ENCODE measurements at regions of chr3 and their contacts with region 1.

Region 1: DNA sequence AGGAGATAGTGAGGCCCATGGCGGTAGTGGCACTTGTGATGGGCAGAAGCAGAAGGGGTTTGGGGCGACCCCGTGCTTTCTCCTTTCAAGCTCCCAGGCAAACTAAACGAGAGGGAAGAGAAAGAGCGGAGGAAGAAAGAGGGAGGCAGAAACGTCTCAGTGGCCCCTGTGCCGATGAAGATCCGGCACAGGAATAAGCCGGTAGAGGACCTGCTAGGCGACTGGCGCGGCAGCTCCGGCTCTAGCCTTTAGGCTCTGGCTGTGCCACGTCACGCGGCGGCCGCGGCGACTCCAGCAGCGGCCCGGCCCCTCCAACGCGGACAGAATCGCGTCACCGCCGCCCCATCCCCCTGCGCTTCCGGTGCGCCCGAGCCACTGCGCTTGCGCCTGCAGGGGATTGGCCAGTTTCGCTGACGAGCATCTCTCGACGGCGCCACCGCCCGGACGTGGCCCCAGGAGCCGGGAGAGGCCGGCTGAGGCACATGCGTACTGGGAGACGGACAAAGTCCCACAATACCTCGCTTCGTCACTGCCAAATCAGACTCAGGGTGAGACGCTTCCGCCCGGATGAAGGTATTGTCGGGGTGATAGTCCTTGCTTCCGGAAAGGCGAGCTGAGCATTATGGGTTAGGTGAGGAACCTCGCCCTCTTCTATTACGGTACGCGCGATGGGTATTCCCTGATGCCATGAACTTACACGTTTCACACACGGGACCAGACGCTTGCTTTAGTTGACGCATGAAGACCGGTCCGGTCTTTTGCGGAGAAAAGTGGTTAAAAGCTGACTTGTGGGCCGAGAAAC is at the start of gene ARF4:
- DNase-seq: peak; percentile 100
- ATAC-seq: peak; percentile 83 to 96 (median 85)
- H3K4me3 ChIP-seq: peak within 1 kb of the TSS; percentile 77
- H3K4me3 Mint-ChIP-seq: peak within 1 kb of the TSS; percentile 95
- H3K27ac ChIP-seq: peak within 1 kb of the TSS; percentile 99
- H3K27ac Mint-ChIP-seq: peak within 1 kb of the TSS; percentile 99
- H3K4me1 ChIP-seq: peaks cover 28% of the 10 kb centered on the region
- H3K4me1 Mint-ChIP-seq: peaks cover 53 to 60% of the 10 kb centered on the region in 2 donors
- H3K27me3 ChIP-seq: no peaks in the 10 kb centered on the region
- H3K27me3 Mint-ChIP-seq: no peaks in the 10 kb centered on the region
- CTCF ChIP-seq: no peak
- total RNA-seq, gene ARF4: 88.0 to 132 (median 89.6) TPM

Region 2: DNA sequence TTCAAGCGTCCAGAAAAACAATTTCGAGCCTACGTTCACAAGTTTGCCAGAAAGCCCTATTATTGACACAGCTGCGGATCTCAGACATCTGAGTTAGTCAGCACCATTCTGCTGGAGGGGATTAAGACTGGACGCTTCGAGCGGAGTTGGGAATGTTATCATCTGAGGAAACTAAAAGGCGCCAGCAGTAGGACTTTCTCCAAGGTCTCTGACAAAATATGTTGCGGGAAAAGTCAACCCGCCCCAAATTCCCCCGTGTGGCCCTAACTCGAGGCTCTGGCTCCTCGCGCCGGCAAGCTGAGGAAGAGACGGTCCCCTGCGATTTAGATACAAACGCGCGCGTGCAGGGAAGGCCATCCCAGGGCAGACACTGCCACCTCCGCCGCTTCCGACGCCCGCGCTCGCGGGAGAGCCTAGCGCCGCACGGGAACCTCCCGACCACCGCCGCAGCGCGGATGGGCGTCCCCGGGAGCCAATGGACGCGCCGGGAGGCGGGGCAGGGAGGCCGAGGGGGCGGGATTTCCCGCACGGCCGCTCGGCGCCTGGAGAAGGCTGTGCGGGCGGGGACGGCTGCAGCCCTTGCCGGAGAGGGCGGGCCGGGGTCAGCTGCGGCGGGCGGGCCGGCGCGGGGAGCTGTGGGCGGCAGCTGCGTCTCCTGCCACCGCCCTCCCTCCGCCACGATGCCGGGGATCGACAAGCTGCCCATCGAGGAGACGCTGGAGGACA is 370.0 kb before region 1 on chr3 and contains the start of gene APPL1:
- intact Hi-C with region 1: loop called (anchors 2 kb)
- DNase-seq: peak; percentile 86 to 93
- ATAC-seq: peak; percentile 86 to 94 (median 93)
- H3K4me3 ChIP-seq: peak within 1 kb of the TSS; percentile 71
- H3K4me3 Mint-ChIP-seq: peak within 1 kb of the TSS; percentile 92
- H3K27ac ChIP-seq: peak within 1 kb of the TSS; percentile 49
- H3K27ac Mint-ChIP-seq: peak within 1 kb of the TSS; percentile 75 to 85
- H3K4me1 ChIP-seq: peaks cover 12% of the 10 kb centered on the region
- H3K4me1 Mint-ChIP-seq: peaks cover 21 to 25% of the 10 kb centered on the region in 2 donors
- H3K27me3 ChIP-seq: no peaks in the 10 kb centered on the region
- H3K27me3 Mint-ChIP-seq: no peaks in the 10 kb centered on the region
- CTCF ChIP-seq: no peak
- total RNA-seq, gene APPL1: 29.6 to 40.8 (median 38.2) TPM

Region 3: DNA sequence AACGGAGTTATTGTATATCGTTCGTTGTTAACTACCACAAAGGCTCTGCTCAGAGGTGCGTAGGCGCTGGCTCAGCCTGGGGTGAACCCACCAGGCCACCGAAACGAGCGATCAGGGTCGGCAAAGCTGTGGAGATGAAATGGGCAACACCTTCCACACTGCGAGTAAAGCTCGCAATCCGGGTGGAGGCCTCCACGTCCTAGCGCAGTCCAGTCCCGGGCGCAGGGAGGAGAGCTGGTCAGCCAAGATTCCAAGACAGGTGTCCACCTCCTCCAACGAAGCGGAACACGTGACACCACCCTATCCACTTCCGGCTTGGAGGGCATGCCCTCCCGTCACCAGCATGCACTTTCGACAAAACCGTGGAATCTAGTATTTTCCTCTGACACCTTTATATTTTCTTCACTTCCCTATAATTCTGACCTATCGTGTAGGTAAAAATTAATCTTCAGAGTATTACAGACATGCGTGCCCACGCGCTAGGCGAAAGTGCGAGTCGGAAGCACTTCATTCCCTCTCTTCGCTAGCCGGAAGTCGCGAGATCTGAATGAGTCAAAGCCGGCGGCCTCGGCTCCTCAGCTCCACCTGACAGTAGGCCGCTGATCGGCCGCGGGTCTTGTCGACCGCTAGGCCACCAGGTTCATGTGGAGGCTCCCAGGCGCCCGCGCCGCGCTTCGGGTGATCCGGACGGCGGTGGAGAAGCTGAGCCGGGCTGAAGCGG is 41.4 kb before region 1 on chr3 and contains the start of gene PDE12:
- intact Hi-C with region 1: loop called (anchors 1 kb)
- DNase-seq: peak; percentile 84 to 90
- ATAC-seq: peak; percentile 78 to 88 (median 82)
- H3K4me3 ChIP-seq: peak within 1 kb of the TSS; percentile 76
- H3K4me3 Mint-ChIP-seq: peak within 1 kb of the TSS; percentile 90
- H3K27ac ChIP-seq: peak within 1 kb of the TSS; percentile 94
- H3K27ac Mint-ChIP-seq: peak within 1 kb of the TSS; percentile 93 to 94
- H3K4me1 ChIP-seq: peaks cover 33% of the 10 kb centered on the region
- H3K4me1 Mint-ChIP-seq: peaks cover 42 to 44% of the 10 kb centered on the region in 2 donors
- H3K27me3 ChIP-seq: no peaks in the 10 kb centered on the region
- H3K27me3 Mint-ChIP-seq: no peaks in the 10 kb centered on the region
- CTCF ChIP-seq: no peak
- total RNA-seq, gene PDE12: 34.4 to 36.6 (median 35.5) TPM

Region 4: GRCh38 chr3:57675530-57675929 is 78.2 kb after region 1 on chr3:
- intact Hi-C with region 1: loop called (anchors 1 kb)
- DNase-seq: no peak
- ATAC-seq: peak; percentile 54 to 65 (median 58)
- H3K4me3 ChIP-seq: no peak overlapping the region
- H3K4me3 Mint-ChIP-seq: peak overlapping the region; percentile 75
- H3K27ac ChIP-seq: peak overlapping the region; percentile 43
- H3K27ac Mint-ChIP-seq: peak overlapping the region; percentile 85 to 87
- H3K4me1 ChIP-seq: peaks cover 40% of the 10 kb centered on the region
- H3K4me1 Mint-ChIP-seq: peaks cover 68 to 70% of the 10 kb centered on the region in 2 donors
- H3K27me3 ChIP-seq: no peaks in the 10 kb centered on the region
- H3K27me3 Mint-ChIP-seq: no peaks in the 10 kb centered on the region
- CTCF ChIP-seq: no peak

Region 5: GRCh38 chr3:57692259-57693147 is 95.2 kb after region 1 on chr3 and contains the start of gene DENND6A:
- intact Hi-C with region 1: loop called (anchors 1 kb)
- DNase-seq: peak; percentile 93 to 98
- ATAC-seq: peak; percentile 76 to 90 (median 80)
- H3K4me3 ChIP-seq: peak within 1 kb of the TSS; percentile 60
- H3K4me3 Mint-ChIP-seq: peak within 1 kb of the TSS; percentile 95
- H3K27ac ChIP-seq: peak within 1 kb of the TSS; percentile 88
- H3K27ac Mint-ChIP-seq: peak within 1 kb of the TSS; percentile 94 to 97
- H3K4me1 ChIP-seq: peaks cover 40% of the 10 kb centered on the region
- H3K4me1 Mint-ChIP-seq: peaks cover 22 to 38% of the 10 kb centered on the region in 2 donors
- H3K27me3 ChIP-seq: no peaks in the 10 kb centered on the region
- H3K27me3 Mint-ChIP-seq: no peaks in the 10 kb centered on the region
- CTCF ChIP-seq: no peak
- total RNA-seq, gene DENND6A: 54.5 to 69.8 (median 57.1) TPM

Region 6: GRCh38 chr3:57755668-57756527 is 158.6 kb after region 1 on chr3 and contains the start of gene SLMAP:
- intact Hi-C with region 1: loop called (anchors 1 kb)
- DNase-seq: peak; percentile 91 to 98
- ATAC-seq: peak; percentile 92 to 98 (median 93)
- H3K4me3 ChIP-seq: peak within 1 kb of the TSS; percentile 81
- H3K4me3 Mint-ChIP-seq: peak within 1 kb of the TSS; percentile 97
- H3K27ac ChIP-seq: peak within 1 kb of the TSS; percentile 79
- H3K27ac Mint-ChIP-seq: peak within 1 kb of the TSS; percentile 89 to 91
- H3K4me1 ChIP-seq: peaks cover 26% of the 10 kb centered on the region
- H3K4me1 Mint-ChIP-seq: peaks cover 27 to 28% of the 10 kb centered on the region in 2 donors
- H3K27me3 ChIP-seq: no peaks in the 10 kb centered on the region
- H3K27me3 Mint-ChIP-seq: no peaks in the 10 kb centered on the region
- CTCF ChIP-seq: no peak
- total RNA-seq, gene SLMAP: 79.4 to 98.6 (median 89.0) TPM

Region 7: GRCh38 chr3:58052373-58053273 is 455.3 kb after region 1 on chr3:
- intact Hi-C with region 1: no loop called
- DNase-seq: no peak
- ATAC-seq: peak in 2 of 3 donors; percentile 19 to 39
- H3K4me3 ChIP-seq: no peak overlapping the region
- H3K4me3 Mint-ChIP-seq: no peak overlapping the region
- H3K27ac ChIP-seq: no peak overlapping the region
- H3K27ac Mint-ChIP-seq: no peak overlapping the region
- H3K4me1 ChIP-seq: peaks cover 11% of the 10 kb centered on the region
- H3K4me1 Mint-ChIP-seq: peaks cover 0 to 27% of the 10 kb centered on the region in 2 donors
- H3K27me3 ChIP-seq: no peaks in the 10 kb centered on the region
- H3K27me3 Mint-ChIP-seq: no peaks in the 10 kb centered on the region
- CTCF ChIP-seq: no peak

Region 8: DNA sequence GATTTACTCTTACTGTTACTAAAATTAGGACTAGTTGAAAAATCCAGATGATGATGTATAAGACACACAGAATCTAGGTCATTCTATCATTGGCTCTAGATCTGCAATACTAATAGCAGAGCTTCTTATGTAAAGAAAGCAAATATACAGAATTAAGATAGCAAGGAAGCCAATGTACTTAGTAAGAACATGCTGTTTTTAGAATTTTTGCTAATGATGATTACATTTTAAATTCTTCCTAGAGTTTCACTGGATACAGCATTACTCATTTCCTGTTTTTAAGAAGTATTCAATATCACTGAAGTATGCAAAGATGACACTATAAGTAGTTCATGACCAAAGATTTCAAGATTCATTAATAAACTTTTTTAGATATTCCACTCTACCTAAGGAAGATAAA is 1391.8 kb after region 1 on chr3:
- intact Hi-C with region 1: no loop called
- DNase-seq: no peak
- ATAC-seq: no peak
- H3K4me3 ChIP-seq: no peak overlapping the region
- H3K4me3 Mint-ChIP-seq: no peak overlapping the region
- H3K27ac ChIP-seq: no peak overlapping the region
- H3K27ac Mint-ChIP-seq: no peak overlapping the region
- H3K4me1 ChIP-seq: no peaks in the 10 kb centered on the region
- H3K4me1 Mint-ChIP-seq: no peaks in the 10 kb centered on the region
- H3K27me3 ChIP-seq: no peaks in the 10 kb centered on the region
- H3K27me3 Mint-ChIP-seq: peaks cover 0 to 8% of the 10 kb centered on the region in 2 donors
- CTCF ChIP-seq: no peak

Measured in natural killer cell (primary cell).